ENCODE measurements at regions of chr2 and their contacts with region 1.

Region 1: GRCh38 chr2:173448938-173449471 is 94.3 kb downstream of the CDCA7 start:
- DNase-seq: peak; percentile 72
- CTCF ChIP-seq: peak; percentile 40

Region 2: GRCh38 chr2:173427887-173428600 is 21.0 kb before region 1 on chr2:
- CTCF ChIA-PET with region 1: interaction called, 10 read pairs
- POLR2A ChIA-PET with region 1: no interaction called
- DNase-seq: no peak
- CTCF ChIP-seq: no peak

Region 3: DNA sequence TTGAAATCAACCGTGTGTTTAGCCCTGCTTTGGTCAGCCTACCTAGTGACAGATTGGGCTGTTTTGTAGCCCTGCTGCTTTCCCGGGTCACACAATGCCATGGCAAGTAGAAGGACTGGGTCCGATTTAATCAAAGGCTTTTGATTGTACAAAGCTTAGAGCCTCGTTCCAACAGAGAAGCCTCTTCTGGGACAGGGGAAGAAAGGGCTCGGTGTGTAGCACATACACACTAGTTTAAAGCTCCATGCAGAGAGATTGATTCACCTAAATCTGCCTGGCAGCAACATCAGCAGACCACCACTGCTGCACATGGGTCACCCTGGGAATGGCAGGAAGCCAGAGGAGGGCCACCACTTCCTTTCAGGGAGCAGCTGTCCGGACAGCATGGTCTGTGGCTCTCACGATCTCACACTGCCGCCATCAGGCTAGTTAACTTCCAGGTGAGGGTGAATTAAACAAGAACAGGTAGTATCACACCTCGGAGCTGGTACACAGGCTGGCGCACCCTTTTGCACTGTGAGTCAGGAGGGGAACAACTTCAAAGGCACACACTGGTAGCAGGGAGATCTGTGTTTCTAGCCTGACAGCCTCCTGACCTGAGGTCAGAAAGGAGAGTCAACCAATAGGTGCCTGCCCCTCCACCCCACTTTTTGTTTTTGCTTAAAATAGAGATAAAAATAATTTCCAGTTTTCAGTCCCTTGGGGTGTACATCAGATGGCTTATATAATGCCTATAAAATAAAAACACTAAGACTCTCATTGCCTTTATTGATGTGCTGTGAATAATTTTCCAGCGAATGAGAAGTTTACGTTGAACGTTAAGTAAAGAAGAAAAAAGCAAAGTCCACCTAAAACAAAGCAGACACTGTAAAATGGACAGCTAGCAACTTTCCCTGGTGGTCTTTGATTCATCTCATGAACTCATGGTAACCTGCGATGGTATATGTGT is 14.2 kb after region 1 on chr2:
- CTCF ChIA-PET with region 1: interaction called, 13 read pairs
- POLR2A ChIA-PET with region 1: no interaction called
- DNase-seq: no peak
- CTCF ChIP-seq: no peak

Region 4: GRCh38 chr2:175233135-175233719 is 1784.2 kb after region 1 on chr2:
- CTCF ChIA-PET with region 1: no interaction called
- POLR2A ChIA-PET with region 1: interaction called, 11 read pairs
- DNase-seq: no peak
- CTCF ChIP-seq: no peak